Naive thymus-derived CD4-positive, alpha-beta T cell (primary cell): ENCODE measurements at regions of chr21 and their contacts with region 1.

Region 1: GRCh38 chr21:43916691-43917514 is 51.9 kb downstream of the AGPAT3 start:
- DNase-seq: peak; percentile 56 to 83 (median 80)
- ATAC-seq: peak; percentile 93
- H3K4me3 ChIP-seq: peak overlapping the region; percentile 71
- H3K4me3 Mint-ChIP-seq: peak overlapping the region; percentile 83 to 95 (median 89)
- H3K27ac ChIP-seq: peak overlapping the region; percentile 84
- H3K27ac Mint-ChIP-seq: peak overlapping the region; percentile 86 to 96 (median 94)
- H3K4me1 ChIP-seq: peaks cover 25 to 33% of the 10 kb centered on the region in 2 donors
- H3K4me1 Mint-ChIP-seq: peaks cover 47 to 74% (median 61%) of the 10 kb centered on the region in 7 donors
- H3K27me3 ChIP-seq: no peaks in the 10 kb centered on the region
- H3K27me3 Mint-ChIP-seq: peaks cover 0 to 4% (median 0%) of the 10 kb centered on the region in 5 donors

Region 2: DNA sequence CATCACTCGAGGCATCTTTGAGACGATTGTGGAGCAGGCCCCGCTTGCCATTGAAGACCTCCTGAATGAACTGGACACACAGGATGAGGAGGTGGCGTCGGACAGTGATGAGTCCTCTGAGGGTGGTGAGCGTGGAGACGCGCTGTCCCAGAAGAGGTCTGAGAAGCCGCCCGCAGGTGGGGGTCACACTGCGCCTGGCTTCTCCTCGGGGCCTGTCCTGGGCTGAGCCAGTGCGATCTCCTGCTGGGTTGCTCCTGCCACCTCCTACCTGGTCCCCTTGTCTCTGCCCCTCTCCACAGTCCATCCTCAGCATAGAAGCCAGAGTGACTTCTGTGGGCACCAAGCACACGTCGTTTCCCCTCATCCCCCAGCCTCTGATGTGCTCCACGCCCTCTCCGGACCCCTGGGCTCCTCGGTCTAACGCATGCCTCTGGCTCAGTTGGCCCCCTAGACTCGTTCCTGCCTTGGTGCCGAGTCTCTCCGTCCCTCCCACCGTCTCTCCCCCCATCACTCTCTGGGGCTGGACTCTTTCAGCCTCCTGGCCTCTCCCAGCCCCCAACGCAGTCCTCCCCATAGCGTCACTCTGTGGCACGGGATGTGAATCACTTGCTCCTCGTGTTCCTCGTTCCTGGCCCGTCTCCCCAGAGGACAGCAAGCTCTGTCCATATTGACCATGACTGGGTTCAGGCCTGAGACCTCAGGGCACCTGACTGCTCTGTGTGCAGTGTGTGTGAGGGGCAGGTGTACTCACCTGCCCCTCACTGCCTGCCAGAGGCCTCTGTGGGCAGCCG is 118.8 kb before region 1 on chr21:
- CTCF ChIA-PET with region 1: no interaction called
- POLR2A ChIA-PET with region 1: no interaction called
- intact Hi-C with region 1: no loop called
- DNase-seq: no peak
- ATAC-seq: no peak
- H3K4me3 ChIP-seq: no peak overlapping the region
- H3K4me3 Mint-ChIP-seq: no peak overlapping the region
- H3K27ac ChIP-seq: no peak overlapping the region
- H3K27ac Mint-ChIP-seq: no peak overlapping the region
- H3K4me1 ChIP-seq: no peaks in the 10 kb centered on the region
- H3K4me1 Mint-ChIP-seq: peaks cover 0 to 6% (median 0%) of the 10 kb centered on the region in 7 donors
- H3K27me3 ChIP-seq: no peaks in the 10 kb centered on the region
- H3K27me3 Mint-ChIP-seq: no peaks in the 10 kb centered on the region

Region 3: DNA sequence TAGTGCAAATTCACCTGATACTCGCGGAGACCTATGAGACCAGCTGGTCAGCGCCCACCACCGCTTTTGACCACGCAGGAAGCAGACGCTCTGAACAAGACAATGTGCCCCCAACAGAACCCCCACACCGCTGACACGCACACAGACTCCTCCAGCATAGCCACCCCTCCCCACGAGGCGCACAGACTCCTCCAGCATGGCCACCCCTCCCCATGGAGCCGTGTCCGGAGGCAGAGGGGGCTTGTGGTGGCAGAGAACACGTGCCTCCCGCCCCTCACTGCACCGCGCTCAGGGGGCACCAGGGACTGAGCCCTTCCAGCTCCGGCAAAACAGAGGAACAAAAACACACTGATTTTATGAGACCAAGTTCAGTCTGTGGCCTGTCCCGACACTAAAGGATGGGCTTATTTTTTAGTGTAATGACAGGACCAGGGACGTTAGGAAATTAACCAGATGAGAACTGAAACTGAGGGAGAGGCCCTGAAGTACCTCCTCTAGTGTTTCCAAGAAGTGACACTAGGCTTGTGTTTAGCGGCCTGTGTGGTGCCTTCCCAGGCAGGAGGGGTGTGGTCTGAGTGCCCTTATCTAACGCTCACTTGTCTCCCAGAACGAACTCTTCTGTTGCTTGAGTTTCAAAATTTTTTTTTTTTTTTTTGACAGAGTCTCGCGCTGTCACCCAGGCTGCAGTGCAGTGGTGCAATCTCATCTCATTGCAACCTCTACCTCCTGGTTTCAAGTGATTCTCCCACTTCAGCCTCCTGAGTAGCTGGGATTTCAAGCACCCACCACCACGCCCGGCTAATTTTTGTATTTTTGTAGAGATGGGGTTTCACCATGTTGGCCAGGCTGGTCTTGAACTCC is 61.9 kb before region 1 on chr21:
- CTCF ChIA-PET with region 1: no interaction called
- POLR2A ChIA-PET with region 1: no interaction called
- intact Hi-C with region 1: no loop called
- DNase-seq: peak in 1 of 9 donors; percentile 61
- ATAC-seq: peak; percentile 87
- H3K4me3 ChIP-seq: no peak overlapping the region
- H3K4me3 Mint-ChIP-seq: peak overlapping the region in 1 of 10 donors; percentile 81
- H3K27ac ChIP-seq: no peak overlapping the region
- H3K27ac Mint-ChIP-seq: peak overlapping the region in 1 of 9 donors; percentile 93
- H3K4me1 ChIP-seq: no peaks in the 10 kb centered on the region
- H3K4me1 Mint-ChIP-seq: peaks cover 0 to 47% (median under 1%) of the 10 kb centered on the region in 7 donors
- H3K27me3 ChIP-seq: no peaks in the 10 kb centered on the region
- H3K27me3 Mint-ChIP-seq: peaks cover 0 to 10% (median 5%) of the 10 kb centered on the region in 5 donors

Region 4: DNA sequence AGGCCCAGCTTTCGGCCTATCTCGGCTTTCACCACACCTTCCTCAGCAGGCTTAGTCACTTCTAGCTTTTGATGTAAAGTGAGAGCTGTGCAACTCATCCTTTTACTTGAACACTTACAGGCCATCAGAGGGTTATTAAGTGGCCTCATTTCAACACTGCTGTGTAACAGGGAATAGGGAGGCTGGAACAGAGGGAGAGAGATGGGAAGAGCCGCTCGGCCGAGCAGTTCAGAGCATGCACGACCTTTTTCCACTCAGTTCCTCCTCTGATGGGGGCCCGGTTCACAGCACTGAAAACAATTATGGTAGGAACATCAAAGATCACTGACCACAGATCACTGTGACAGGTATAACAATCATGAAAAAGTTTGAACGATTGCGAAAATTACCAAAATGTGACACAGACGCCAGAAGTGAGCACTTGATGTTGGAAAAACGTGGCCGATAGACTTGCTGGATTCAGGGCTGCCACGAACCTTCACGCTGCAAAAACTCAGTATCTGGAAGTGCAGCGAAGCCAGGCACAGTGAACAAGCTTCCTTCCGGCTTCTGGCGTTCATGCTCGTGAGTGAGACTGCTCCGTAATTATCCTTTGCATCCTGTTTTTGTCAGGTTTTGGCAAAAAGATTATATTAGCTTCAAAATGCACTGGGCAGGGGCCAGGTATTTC is 23.2 kb before region 1 on chr21:
- CTCF ChIA-PET with region 1: interaction called, 3 read pairs
- POLR2A ChIA-PET with region 1: interaction called, 4 read pairs
- intact Hi-C with region 1: loop called in 1 of 2 experiments (anchors 1 kb)
- DNase-seq: peak in 5 of 9 donors; percentile 18 to 33 (median 25)
- ATAC-seq: peak; percentile 53
- H3K4me3 ChIP-seq: peak overlapping the region; percentile 44
- H3K4me3 Mint-ChIP-seq: peak overlapping the region; percentile 35 to 79 (median 75)
- H3K27ac ChIP-seq: peak overlapping the region; percentile 53
- H3K27ac Mint-ChIP-seq: peak overlapping the region; percentile 60 to 94 (median 80)
- H3K4me1 ChIP-seq: peaks cover 0 to 9% of the 10 kb centered on the region in 2 donors
- H3K4me1 Mint-ChIP-seq: peaks cover 16 to 58% (median 53%) of the 10 kb centered on the region in 7 donors
- H3K27me3 ChIP-seq: no peaks in the 10 kb centered on the region
- H3K27me3 Mint-ChIP-seq: no peaks in the 10 kb centered on the region